Activated CD4-positive, alpha-beta memory T cell treated with anti-CD3 and anti-CD28 coated beads for 36 hours (primary cell): ENCODE measurements at regions of chr14 and their contacts with region 1.

Region 1: DNA sequence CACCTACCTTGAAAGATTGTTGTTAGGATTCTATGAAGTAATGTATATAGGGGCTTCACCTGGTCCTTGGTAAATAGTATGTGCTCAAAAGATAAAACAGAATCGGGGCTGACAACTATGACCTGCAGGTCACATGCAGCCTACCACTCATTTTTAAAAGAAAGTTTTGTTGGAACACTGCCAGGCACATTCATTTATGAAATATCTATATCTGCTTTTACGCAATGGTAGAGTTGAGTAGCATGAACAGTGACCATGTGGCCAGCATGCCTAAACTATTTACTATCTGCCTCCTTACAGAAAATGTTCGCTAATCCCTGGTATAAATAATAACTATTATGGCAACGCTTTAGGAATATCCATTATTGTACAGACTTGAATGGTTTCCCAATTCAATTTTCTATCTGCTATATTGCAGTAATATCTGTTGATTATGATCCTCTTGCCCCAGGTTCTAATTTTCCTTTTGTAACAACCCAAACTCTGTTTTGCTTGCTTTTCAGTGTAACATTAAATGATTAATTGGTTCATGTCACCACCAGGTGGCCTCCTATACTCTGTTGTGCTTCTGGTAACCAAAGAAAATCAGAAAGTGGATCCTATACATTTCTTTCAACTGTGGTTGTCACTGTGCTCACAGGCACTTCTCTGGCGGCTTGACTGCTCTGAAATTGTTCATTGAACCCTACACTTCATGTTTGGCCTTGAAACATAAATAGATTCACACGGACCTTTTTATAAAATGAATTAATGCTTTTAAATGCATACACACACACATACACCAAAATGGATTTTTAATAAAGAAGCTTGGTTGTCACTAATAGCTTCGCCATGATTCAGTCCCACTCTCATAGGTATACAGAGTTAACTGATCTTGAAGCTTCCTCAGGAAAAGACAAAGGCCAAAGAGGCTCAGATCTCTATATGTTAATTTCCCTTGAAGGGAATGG is 227.7 kb upstream of the NPAS3 start:
- DNase-seq: peak; percentile 10
- H3K4me3 Mint-ChIP-seq: no peak overlapping the region
- H3K27ac Mint-ChIP-seq: no peak overlapping the region
- H3K4me1 Mint-ChIP-seq: peaks cover 5% of the 10 kb centered on the region
- H3K27me3 Mint-ChIP-seq: no peaks in the 10 kb centered on the region

Region 2: DNA sequence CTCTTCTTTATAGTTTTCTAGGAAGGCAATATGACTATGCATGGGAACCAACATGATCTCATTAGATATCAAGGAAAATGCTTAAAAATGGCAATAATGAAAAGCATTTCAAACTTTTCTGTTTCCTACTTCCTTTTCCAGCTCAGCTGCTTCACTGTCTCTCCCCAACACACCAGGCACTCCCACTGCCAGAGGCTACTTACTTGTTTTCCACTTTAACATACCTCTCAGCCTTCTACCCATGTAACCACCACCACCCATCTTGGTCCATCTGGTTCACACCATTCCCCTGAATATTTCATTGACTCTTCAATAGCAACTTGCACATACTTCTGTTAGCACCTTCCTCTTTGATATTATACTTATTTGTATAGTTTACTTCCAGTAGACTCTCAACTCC is 59.4 kb after region 1 on chr14:
- CTCF ChIA-PET with region 1: no interaction called
- POLR2A ChIA-PET with region 1: no interaction called
- intact Hi-C with region 1: no loop called
- DNase-seq: no peak
- H3K4me3 Mint-ChIP-seq: no peak overlapping the region
- H3K27ac Mint-ChIP-seq: no peak overlapping the region
- H3K4me1 Mint-ChIP-seq: no peaks in the 10 kb centered on the region
- H3K27me3 Mint-ChIP-seq: no peaks in the 10 kb centered on the region

Region 3: GRCh38 chr14:32939254-32940065 is 228.5 kb after region 1 on chr14:
- CTCF ChIA-PET with region 1: no interaction called
- POLR2A ChIA-PET with region 1: no interaction called
- intact Hi-C with region 1: loop called (anchors 5 kb)
- DNase-seq: peak; percentile 39
- H3K4me3 Mint-ChIP-seq: peak overlapping the region; percentile 71
- H3K27ac Mint-ChIP-seq: no peak overlapping the region
- H3K4me1 Mint-ChIP-seq: peaks cover 10% of the 10 kb centered on the region
- H3K27me3 Mint-ChIP-seq: peaks cover 55% of the 10 kb centered on the region

Region 4: DNA sequence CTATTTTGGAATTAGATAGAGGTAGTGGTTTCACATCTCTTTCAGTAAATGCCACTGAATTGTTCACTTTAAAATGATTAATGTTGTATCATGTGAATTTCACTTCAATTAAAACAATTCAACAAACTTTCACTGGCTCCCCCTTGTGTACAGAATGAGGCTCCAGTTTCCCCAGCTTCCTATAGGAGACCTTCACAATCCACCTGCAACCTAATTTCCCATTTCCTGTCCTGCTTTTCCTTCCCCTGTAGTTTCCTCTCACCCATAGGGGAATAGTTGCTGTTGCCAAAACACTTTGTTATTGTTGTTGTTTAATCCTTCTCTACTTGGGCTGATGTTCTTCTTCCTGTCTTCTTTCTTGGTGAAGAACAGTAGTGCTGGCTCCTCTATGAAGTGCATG is 287.4 kb after region 1 on chr14:
- CTCF ChIA-PET with region 1: no interaction called
- POLR2A ChIA-PET with region 1: no interaction called
- intact Hi-C with region 1: loop called (anchors 5 kb)
- DNase-seq: no peak
- H3K4me3 Mint-ChIP-seq: no peak overlapping the region
- H3K27ac Mint-ChIP-seq: no peak overlapping the region
- H3K4me1 Mint-ChIP-seq: no peaks in the 10 kb centered on the region
- H3K27me3 Mint-ChIP-seq: no peaks in the 10 kb centered on the region

Region 5: DNA sequence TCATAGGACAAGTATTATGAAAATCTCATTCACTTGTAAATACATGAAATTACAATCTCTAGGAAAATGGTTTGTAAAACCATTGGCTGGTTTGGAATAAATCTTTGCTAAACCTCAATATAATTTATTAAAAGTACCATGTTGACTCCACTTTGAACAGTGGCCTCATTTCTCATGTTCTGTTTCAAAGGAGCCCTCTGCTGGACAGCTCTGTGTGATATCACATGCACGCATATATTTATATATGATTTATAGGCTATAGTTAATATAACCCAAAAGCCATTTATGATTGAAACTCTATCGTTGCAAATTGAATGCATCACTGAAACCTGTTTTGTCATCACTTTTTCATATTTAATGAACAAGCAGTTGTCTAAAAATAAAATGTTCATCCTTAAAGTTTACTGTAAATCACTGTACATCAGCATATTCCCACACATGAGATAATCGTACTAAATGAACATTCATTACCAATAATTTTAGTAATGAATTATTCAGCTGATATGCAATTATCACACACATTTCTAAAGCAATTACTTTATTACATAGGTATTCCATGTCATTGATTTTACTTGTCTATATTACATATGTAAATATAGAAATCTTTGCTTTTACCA is 721.5 kb after region 1 on chr14:
- CTCF ChIA-PET with region 1: interaction called, 3 read pairs
- POLR2A ChIA-PET with region 1: no interaction called
- intact Hi-C with region 1: loop called (anchors 5 kb)
- DNase-seq: peak; percentile 10
- H3K4me3 Mint-ChIP-seq: no peak overlapping the region
- H3K27ac Mint-ChIP-seq: no peak overlapping the region
- H3K4me1 Mint-ChIP-seq: peaks cover 12% of the 10 kb centered on the region
- H3K27me3 Mint-ChIP-seq: no peaks in the 10 kb centered on the region